ENCODE measurements at regions of chr17 and their contacts with region 1.

Region 1: DNA sequence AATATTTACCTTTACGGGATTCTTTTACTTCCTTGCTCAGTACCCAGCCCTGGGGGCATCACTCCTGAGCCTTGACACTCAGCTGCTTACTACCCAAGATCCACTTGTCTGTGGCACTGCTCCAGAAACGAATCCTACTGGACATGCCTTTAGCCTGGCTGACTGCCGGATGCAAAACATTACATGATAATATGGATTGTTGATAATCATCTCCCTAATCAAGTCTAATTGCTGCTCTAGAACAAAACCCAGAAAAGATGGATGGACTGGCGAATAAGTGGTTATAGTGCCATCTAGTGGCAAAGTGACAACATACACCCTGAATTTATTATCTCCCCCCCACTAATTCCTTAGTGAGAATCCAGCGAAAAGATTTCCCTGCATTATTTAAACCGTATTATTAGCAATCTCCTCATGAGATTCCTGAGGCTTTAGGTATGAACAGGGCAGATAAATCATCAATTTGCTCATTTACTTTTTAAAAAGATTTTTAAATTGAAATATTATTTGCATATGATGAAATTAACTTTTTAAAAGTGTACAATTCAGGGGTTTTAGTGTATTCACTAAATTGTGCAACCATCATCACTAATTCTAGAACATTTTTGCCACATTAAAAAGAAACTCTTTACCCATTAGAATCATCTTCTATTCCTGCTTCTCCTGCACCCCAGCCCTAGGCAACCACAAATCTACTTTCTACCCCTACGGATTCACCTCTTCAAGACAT is 61.6 kb downstream of the RGS9 start:
- DNase-seq: no peak
- ATAC-seq: peak; percentile 67
- H3K4me3 Mint-ChIP-seq: no peak overlapping the region
- H3K27ac Mint-ChIP-seq: peak overlapping the region; percentile 8
- H3K4me1 Mint-ChIP-seq: no peaks in the 10 kb centered on the region
- H3K27me3 Mint-ChIP-seq: peaks cover 2% of the 10 kb centered on the region
- CTCF ChIP-seq: peak; percentile 78

Region 2: GRCh38 chr17:64920026-64920418 is 278.8 kb before region 1 on chr17:
- CTCF ChIA-PET with region 1: no interaction called
- POLR2A ChIA-PET with region 1: no interaction called
- intact Hi-C with region 1: loop called (anchors 10 kb)
- DNase-seq: no peak
- ATAC-seq: no peak
- H3K4me3 Mint-ChIP-seq: peak overlapping the region; percentile 87
- H3K27ac Mint-ChIP-seq: peak overlapping the region; percentile 92
- H3K4me1 Mint-ChIP-seq: peaks cover 47% of the 10 kb centered on the region
- H3K27me3 Mint-ChIP-seq: no peaks in the 10 kb centered on the region
- CTCF ChIP-seq: no peak

Region 3: DNA sequence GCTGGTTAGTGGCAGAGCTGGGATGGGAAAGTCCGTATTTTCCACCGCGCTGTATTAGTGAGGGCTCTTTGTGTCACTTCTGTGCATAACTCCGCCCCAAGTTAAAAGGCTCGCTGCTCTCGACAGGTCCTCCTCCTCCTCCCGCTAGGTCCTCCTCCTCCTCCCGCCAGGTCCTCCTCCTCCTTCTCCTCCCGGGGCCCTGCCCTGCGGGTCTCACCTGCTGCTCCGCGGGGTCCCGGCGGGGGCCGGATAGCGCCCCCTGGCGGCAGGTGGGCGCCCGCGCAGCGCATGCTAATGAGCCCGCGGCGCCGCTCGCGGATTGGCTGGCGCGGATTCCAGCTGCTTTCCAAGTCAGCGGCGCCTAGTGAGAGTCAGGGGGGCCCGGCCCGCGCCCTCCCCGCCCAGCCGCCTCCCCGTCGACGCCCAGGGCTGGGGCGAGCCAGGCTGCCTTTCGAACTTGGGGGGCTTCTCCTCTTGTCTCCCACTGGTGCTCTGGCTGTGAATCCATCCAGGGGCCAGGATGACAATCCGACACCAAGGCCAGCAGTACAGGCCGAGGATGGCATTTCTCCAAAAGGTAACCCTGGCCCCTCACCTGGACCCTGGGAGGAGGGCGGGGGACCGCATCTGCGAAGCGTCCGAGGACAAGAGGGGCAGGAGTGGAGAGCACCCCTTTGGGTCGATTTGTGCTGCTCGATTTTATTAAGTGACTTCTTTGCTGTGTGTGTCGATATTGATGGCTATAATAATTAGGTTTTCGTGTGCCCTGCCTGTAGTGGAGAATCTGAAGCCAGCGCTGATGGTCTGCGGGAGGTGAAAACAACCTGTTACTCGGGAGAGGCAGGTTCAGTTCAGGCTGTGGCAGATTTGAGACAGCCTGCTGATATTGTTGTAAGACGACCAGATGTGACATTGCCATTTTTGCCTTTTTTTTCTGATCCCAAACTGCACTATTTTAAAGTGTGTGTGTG is 61.5 kb before region 1 on chr17 and contains the start of gene RGS9:
- CTCF ChIA-PET with region 1: interaction called, 3 read pairs
- POLR2A ChIA-PET with region 1: no interaction called
- intact Hi-C with region 1: loop called (anchors 1 kb)
- DNase-seq: peak; percentile 84
- ATAC-seq: peak; percentile 91
- H3K4me3 Mint-ChIP-seq: peak within 1 kb of the TSS; percentile 81
- H3K27ac Mint-ChIP-seq: peak within 1 kb of the TSS; percentile 65
- H3K4me1 Mint-ChIP-seq: peaks cover 20% of the 10 kb centered on the region
- H3K27me3 Mint-ChIP-seq: peaks cover 9% of the 10 kb centered on the region
- CTCF ChIP-seq: no peak
- total RNA-seq, gene RGS9: 3.2 TPM in 2 replicates

Region 4: GRCh38 chr17:65389953-65390352 is 191.1 kb after region 1 on chr17:
- CTCF ChIA-PET with region 1: no interaction called
- POLR2A ChIA-PET with region 1: no interaction called
- intact Hi-C with region 1: no loop called
- DNase-seq: no peak
- ATAC-seq: no peak
- H3K4me3 Mint-ChIP-seq: no peak overlapping the region
- H3K27ac Mint-ChIP-seq: no peak overlapping the region
- H3K4me1 Mint-ChIP-seq: no peaks in the 10 kb centered on the region
- H3K27me3 Mint-ChIP-seq: peaks cover 4% of the 10 kb centered on the region
- CTCF ChIP-seq: no peak